Mucosa of descending colon (tissue), 3 donors: ENCODE measurements at regions of chr12 and their contacts with region 1.

Region 1: DNA sequence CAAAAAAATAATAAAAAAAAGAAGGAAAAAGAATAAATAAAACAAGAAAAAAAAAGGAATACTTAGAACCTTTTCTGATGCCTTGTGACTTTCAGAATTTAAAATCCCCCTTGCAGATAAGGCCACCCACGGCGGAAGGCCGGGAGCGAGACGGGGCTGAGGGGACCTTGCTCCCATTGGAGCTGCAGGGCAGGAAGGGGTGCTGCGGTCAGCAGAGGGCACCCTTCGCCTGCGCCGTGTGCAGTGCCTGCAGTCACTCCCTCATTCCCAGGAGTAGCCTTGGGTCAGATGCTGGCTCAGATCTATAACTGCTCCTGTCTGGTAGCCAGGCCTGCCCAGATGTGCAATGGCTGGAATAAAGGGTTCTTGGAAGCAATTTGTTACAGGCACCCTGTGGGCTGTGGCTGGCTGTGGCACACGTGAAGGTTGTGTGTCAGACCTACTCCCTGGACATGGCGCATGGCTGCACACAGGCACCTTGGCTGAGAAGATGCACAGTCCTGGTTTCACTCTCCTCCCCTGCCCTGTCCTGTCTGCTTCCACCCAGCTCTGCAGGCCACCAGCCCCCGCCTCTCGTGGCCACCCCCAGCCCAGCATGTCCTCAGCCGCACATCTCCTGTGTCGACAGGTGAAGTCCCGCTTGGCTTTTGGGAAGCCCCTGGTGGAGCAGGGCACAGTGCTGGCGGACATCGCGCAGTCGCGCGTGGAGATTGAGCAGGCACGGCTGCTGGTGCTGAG is 13.4 kb upstream of the ALDH2 start:
- DNase-seq: peak; percentile 69 to 77 (median 76)
- ATAC-seq: peak; percentile 98
- H3K4me3 ChIP-seq: no peak overlapping the region
- H3K4me1 ChIP-seq: no peaks in the 10 kb centered on the region
- CTCF ChIP-seq: peak; percentile 62

Region 2: GRCh38 chr12:111599459-111600204 is 153.7 kb before region 1 on chr12:
- intact Hi-C with region 1: no loop called
- DNase-seq: peak; percentile 88 to 95 (median 91)
- ATAC-seq: peak; percentile 83
- H3K4me3 ChIP-seq: peak overlapping the region; percentile 94
- H3K4me1 ChIP-seq: peaks cover 10% of the 10 kb centered on the region
- CTCF ChIP-seq: no peak

Region 3: DNA sequence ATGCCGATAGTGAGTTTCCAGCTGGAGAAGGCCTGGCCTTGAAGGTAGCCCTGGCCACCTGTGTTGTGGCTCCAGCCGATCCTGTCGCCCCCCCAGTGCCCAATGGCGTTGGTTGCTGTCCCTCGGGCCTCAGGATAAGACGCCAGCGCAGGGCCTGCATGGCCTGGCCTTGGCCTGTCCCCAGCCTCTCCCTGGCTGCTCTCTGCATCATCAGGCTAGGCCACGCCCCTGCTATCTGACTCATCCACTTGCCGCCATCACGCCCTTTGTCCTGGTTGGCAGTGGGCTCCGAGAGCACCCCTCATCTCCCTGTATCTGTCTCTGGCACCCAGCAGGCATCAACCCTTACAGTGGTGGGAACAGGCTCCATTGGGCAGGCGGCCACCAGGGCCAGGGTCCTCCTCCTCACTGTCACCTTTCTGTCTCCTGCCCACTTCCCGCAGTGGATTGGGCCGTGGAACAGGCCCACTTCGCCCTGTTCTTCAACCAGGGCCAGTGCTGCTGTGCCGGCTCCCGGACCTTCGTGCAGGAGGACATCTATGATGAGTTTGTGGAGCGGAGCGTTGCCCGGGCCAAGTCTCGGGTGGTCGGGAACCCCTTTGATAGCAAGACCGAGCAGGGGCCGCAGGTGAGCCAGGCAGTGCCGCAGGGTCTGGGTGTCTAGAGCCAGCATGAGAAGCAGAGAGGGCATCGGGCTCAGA is 39.0 kb after region 1 on chr12:
- intact Hi-C with region 1: loop called in 1 of 2 experiments (anchors 5 kb)
- DNase-seq: peak; percentile 66 to 73 (median 69)
- ATAC-seq: peak; percentile 88
- H3K4me3 ChIP-seq: no peak overlapping the region
- H3K4me1 ChIP-seq: peaks cover 2% of the 10 kb centered on the region
- CTCF ChIP-seq: no peak

Region 4: GRCh38 chr12:111812881-111813741 is 59.8 kb after region 1 on chr12:
- intact Hi-C with region 1: loop called (anchors 5 kb)
- DNase-seq: peak in 2 of 3 donors; percentile 65 to 85
- ATAC-seq: peak; percentile 98
- H3K4me3 ChIP-seq: no peak overlapping the region
- H3K4me1 ChIP-seq: no peaks in the 10 kb centered on the region
- CTCF ChIP-seq: peak; percentile 79